ENCODE measurements at regions of chr1 and their contacts with region 1.

Region 1: DNA sequence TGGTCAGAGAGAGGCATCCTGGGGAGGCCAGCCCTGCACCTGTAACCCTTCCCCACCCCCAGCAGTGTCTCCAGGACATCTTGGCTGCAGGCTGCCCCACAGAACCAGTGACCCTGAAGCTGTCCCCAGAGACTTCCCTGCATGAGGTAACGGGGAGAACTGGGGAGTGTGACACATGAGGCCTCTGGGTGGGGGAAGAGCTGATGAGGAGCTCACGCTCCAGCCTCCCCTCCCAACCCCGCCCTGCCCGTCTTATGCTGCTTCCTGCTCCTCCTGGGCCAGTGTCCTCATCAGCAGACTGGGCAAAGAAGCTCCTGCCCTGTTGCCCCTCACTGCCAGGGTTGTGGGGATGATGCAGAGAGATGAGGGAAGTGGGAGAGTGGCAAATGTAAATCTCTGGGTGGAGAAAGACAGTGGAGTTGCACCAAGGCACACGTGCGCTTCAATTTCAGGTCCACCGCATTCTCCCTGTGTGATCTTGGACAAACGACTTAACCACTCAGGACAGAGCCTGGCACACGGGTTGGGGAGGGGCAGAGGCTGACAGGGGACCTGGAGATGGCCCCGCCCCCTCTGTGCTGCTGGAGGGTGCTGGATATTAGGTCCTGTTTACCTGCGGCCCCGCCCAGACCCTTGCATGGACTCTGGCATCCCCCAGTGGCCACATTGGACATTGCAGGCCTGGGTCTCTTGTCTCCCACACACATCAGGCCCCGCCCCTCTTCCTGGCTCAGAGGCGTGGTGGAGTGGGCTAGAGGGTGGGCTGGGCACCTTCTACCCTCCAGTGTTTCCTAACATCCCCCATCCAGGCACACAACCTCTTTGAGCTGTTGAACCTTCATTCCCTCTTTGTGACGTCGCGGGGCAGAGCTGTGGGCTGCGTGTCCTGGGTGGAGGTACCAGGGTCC is 12.3 kb downstream of the CLCNKB start:
- DNase-seq: peak; percentile 86

Region 2: DNA sequence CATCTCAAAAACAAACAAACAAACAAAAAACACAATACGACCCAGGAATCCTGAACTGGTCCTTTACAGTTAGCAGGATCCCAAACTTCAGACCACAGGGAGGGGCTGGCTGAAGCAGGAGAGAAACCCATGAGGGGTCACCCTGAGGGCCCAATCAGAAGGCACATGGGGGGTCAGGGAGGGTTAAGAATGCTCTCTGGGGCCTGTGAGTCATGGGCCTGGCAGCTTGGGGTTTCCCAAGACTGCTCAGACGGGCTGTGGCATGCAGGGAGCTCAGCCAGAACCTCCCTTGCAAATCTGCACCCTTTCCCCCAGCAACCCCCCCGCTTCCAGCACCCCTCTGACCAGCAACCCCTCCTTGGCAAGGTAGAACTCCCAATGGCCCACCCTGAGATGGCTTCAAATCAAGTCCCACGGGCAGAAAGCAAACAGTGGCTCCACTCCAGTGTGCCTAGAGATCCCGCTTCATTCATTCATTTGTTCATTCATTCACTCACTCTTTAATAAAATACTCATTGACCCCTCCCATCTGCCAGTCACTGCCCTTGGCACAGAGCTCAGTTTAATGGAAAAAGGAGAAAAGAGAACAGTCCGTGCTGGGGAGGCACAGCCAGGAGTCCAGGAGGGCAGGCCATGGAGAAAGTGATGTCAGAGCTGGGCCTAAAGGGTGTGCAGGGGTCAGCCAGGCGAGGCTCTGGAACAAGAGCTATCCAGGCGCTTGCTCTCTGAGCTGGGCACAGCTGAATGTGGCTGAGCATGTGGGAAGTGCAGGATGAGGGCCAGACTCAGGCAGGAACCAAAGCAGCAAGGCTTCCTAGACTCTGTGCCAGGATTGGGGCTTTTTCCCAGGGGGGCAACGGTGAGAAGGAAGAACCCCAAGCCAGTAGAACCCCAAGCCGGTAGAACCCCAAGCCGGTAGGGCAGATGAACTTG is 256.6 kb before region 1 on chr1:
- intact Hi-C with region 1: loop called (anchors 5 kb)
- DNase-seq: no peak

Region 3: DNA sequence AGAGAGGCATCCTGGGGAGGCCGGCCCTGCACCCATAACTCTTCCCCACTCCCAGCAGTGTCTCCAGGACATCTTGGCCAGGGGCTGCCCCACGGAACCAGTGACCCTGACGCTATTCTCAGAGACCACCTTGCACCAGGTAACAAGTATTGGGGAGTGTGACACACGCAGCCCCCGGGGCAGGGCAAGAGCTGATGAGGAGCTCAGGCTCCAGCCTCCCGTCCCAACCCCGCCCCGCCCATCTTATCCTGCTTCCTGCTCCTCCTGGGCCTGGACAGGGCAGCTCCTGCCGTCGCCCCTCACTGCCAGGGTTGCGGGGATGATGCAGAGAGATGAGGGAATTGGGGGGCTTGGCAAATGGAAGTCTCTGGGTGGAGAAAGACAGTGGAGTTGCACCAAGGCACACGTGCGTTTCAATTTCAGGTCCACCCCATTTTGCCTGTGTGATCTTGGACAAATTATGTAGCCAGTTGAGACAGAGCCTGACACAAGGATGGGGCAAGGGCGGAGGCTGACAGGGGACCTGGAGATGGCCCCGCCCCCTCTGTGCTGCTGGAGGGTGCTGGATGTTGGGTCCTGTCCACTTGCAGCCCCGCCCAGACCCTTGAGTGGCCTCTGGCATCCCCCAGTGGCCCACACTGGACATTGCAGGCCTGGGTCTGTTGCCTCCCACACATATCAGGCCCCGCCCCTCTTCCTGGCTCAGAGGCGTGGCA is 23.3 kb before region 1 on chr1:
- intact Hi-C with region 1: no loop called
- DNase-seq: peak; percentile 92